ENCODE measurements at regions of chr12 and their contacts with region 1.

Region 1: GRCh38 chr12:130871286-130872178 is at the start of gene RAN:
- DNase-seq: peak; percentile 89
- ATAC-seq: peak; percentile 79
- H3K4me3 Mint-ChIP-seq: peak within 1 kb of the TSS; percentile 92
- H3K27ac Mint-ChIP-seq: peak within 1 kb of the TSS; percentile 93
- H3K4me1 Mint-ChIP-seq: peaks cover 42% of the 10 kb centered on the region
- H3K27me3 Mint-ChIP-seq: no peaks in the 10 kb centered on the region
- CTCF ChIP-seq: no peak
- total RNA-seq, gene RAN: 748 and 757 TPM in 2 replicates

Region 2: DNA sequence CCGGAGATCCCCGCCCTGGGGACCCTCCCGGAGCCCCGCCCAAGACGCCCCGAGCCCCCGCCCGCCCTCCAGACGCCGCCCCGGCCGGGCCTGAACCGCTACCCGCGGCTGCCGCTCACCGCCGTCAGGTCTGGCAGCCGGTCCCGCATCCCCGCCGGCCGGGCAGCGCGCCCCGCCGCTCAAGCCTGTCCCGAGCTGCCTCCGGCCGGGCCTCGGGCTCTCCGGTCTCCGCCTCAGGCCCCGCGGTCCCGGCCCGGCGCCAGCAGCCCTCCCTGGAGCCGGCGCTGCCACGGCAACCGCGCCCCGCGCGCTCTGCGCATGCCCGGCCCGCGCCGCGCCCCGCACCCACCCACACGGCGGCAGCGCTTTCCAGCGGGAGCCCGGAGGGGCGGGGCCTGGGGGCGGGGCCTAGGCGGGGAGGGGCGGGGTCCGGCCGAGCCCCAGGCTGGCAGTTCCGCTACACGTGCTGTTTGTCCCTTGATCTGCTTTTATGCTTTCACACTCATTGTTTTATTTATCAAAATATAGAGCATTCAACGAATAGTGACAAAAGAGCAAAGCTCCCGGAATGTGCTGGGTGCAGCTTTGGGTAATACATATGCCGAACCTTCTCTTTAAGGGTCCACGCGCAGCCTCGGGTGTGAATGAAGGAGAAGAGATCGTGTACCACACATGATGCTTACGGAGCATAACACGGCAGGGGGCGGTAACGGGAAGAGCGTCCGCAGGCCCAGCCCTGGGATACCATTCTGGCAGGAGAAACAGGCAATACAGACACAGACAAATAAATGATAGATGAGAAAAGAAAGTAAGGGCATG is 32.4 kb before region 1 on chr12 and contains the start of gene STX2:
- CTCF ChIA-PET with region 1: interaction called, 3 read pairs
- POLR2A ChIA-PET with region 1: no interaction called
- intact Hi-C with region 1: loop called (anchors 1 kb)
- DNase-seq: peak; percentile 96
- ATAC-seq: peak; percentile 94
- H3K4me3 Mint-ChIP-seq: peak within 1 kb of the TSS; percentile 83
- H3K27ac Mint-ChIP-seq: peak within 1 kb of the TSS; percentile 61
- H3K4me1 Mint-ChIP-seq: peaks cover 18% of the 10 kb centered on the region
- H3K27me3 Mint-ChIP-seq: no peaks in the 10 kb centered on the region
- CTCF ChIP-seq: no peak
- total RNA-seq, gene STX2: 11.0 and 11.4 TPM in 2 replicates

Region 3: GRCh38 chr12:130909111-130909510 is 37.6 kb after region 1 on chr12:
- CTCF ChIA-PET with region 1: no interaction called
- POLR2A ChIA-PET with region 1: no interaction called
- intact Hi-C with region 1: no loop called
- DNase-seq: no peak
- ATAC-seq: no peak
- H3K4me3 Mint-ChIP-seq: no peak overlapping the region
- H3K27ac Mint-ChIP-seq: no peak overlapping the region
- H3K4me1 Mint-ChIP-seq: no peaks in the 10 kb centered on the region
- H3K27me3 Mint-ChIP-seq: peaks cover 14% of the 10 kb centered on the region
- CTCF ChIP-seq: no peak

Region 4: DNA sequence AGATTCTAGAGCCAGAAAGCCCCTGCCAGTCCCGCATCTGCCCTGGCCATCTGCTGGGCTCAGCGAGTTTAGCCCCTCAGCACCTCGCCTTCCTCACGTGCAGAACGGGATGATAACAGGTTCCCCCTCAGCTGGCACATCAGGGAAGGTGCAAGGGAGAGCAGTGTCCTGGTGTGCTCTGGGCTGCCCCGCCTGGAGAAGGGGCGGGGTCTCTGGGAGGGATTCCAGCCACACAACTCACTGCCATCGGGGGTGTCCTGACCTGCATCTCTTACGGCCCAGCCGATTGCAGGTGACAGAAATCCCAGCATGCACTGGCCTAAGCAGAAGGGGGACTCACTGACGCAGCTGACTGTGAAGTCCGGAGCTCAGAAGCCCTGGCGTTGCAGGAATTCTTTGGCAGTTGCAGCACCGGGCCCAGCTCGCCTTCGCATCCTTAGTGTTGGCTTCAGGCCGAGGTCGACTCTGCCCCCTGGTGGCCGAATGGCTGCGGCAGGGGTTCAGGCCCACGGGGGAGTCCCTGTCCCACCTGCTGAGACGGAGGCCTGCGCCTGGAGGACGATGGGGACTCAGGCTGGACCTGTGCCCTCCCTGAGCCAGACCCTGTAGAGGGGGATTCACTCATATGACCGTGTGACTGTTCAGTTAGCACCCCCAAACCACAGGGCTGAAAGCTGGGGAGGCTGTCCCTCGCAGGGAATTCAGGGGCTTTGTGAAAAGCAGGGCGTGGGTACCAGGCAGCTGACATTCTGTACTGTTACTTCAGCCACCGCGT is 260.8 kb after region 1 on chr12:
- CTCF ChIA-PET with region 1: interaction called, 8 read pairs
- POLR2A ChIA-PET with region 1: no interaction called
- intact Hi-C with region 1: loop called (anchors 1 kb)
- DNase-seq: peak; percentile 72
- ATAC-seq: peak; percentile 77
- H3K4me3 Mint-ChIP-seq: no peak overlapping the region
- H3K27ac Mint-ChIP-seq: no peak overlapping the region
- H3K4me1 Mint-ChIP-seq: no peaks in the 10 kb centered on the region
- H3K27me3 Mint-ChIP-seq: peaks cover 2% of the 10 kb centered on the region
- CTCF ChIP-seq: no peak

Region 5: DNA sequence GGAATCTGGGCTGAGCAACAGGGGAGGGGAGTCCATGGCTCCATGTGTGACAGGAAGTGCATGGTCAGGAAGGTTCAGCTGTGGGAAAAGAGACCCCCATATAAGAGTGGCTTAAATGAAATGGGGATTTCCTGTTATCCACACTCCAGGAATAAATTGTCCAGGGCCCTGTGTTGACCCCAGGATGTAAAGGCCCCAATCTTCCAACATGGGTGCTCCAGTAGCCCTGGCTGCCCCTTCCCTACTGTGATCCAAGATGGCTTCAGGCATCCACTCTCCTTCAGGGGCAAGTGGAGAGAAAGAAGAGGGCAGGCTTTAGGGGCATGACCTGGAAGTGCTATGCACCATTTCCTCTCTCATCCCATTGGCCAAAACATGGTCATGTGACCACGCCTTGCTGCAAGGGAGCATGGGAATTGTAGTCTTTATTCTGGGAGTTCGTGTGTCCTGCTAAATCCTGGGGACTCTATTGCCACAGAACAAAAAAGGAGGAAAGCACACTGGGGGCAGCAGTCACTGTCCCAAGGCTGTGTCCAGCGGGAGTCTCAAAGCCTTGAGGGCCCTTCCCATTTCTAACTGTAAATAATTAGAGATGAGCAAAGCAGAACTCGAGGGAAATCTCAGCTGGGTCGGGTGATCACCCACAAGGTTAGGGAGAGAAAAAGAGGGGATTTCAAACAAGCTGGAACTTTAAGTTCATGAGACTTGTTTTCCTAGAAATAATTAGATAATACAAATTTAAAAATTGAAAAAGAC is 371.4 kb after region 1 on chr12:
- CTCF ChIA-PET with region 1: no interaction called
- POLR2A ChIA-PET with region 1: no interaction called
- intact Hi-C with region 1: no loop called
- DNase-seq: no peak
- ATAC-seq: no peak
- H3K4me3 Mint-ChIP-seq: no peak overlapping the region
- H3K27ac Mint-ChIP-seq: no peak overlapping the region
- H3K4me1 Mint-ChIP-seq: no peaks in the 10 kb centered on the region
- H3K27me3 Mint-ChIP-seq: peaks cover 2% of the 10 kb centered on the region
- CTCF ChIP-seq: no peak

Region 6: DNA sequence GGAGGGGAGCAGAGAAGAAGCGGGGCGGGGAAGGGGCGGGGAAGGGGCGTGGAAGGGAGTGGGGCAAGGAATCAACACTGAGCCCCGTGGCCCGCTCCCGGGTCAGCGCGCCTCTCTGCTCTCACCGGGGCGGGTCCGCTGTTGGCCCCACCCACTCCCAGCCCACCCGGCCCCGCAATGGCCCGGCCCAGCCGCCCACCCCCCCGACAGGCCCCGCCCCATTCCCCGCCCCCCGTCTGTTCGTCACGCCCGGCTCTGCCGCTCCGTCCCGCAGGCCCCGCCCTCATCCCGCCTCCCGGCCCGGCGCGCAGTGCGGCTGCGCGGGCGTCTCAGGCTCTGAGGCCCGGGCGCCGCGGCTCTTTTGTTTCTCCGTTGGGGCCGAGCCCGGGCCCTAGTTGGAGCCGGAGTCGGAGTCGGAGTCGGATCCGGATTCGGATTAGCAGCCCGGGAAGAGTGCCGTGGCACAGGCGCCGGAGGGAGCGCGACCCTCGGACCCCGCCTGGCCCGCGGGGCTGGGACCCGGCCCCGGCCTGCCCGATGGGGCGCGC is 1022.9 kb after region 1 on chr12 and contains the start of gene ULK1:
- CTCF ChIA-PET with region 1: no interaction called
- POLR2A ChIA-PET with region 1: no interaction called
- intact Hi-C with region 1: loop called (anchors 10 kb)
- DNase-seq: peak; percentile 97
- ATAC-seq: peak; percentile 86
- H3K4me3 Mint-ChIP-seq: peak within 1 kb of the TSS; percentile 82
- H3K27ac Mint-ChIP-seq: peak within 1 kb of the TSS; percentile 46
- H3K4me1 Mint-ChIP-seq: peaks cover 22% of the 10 kb centered on the region
- H3K27me3 Mint-ChIP-seq: peaks cover 3% of the 10 kb centered on the region
- CTCF ChIP-seq: no peak
- total RNA-seq, gene ULK1: 20.1 and 27.0 TPM in 2 replicates

Measured in activated B cell treated with CpG ODN at 0.5 μM for 24 hours (primary cell).